ENCODE measurements at regions of chr10 and their contacts with region 1.

Region 1: DNA sequence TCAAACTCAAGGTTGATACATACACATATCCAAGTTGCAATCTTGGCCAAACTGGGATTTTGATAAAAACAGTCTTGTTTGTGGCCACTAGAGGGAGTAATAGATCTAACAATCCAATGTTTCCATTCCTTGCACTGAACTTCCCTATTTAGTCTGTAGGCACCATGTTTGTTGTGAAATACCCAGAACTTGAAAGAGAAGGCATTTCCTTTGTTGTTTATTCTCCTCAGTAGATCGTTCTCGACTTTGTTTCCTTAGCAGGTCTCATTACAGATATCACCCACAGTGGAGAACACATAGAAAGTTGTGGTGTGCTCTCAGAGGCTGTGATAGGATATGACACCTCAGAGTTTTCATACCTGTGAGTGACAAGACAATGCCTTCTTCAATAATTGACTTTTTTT is 70.3 kb upstream of the MXI1 start:
- DNase-seq: no peak
- ATAC-seq: peak; percentile 58 to 79 (median 78)
- H3K4me3 ChIP-seq: peak overlapping the region in 1 of 12 donors; percentile 33
- H3K27ac ChIP-seq: peak overlapping the region in 8 of 12 donors; percentile 10 to 84 (median 42)
- H3K4me1 ChIP-seq: peaks cover 4 to 43% (median 19%) of the 10 kb centered on the region in 12 donors
- H3K27me3 ChIP-seq: no peaks in the 10 kb centered on the region
- CTCF ChIP-seq: peak; percentile 67 to 90 (median 82)
- POLR2A ChIP-seq: no peak

Region 2: GRCh38 chr10:110176141-110177030 is 39.2 kb after region 1 on chr10:
- intact Hi-C with region 1: loop called in 2 of 10 experiments (anchors 1 to 5 kb)
- DNase-seq: peak in 4 of 5 donors; percentile 41 to 66 (median 48)
- ATAC-seq: peak; percentile 62 to 85 (median 72)
- H3K4me3 ChIP-seq: peak overlapping the region in 8 of 12 donors; percentile 6 to 27 (median 16)
- H3K27ac ChIP-seq: peak overlapping the region; percentile 29 to 89 (median 66)
- H3K4me1 ChIP-seq: peaks cover 0 to 23% (median 14%) of the 10 kb centered on the region in 12 donors
- H3K27me3 ChIP-seq: no peaks in the 10 kb centered on the region
- CTCF ChIP-seq: peak in 1 of 12 donors; percentile 7
- POLR2A ChIP-seq: no peak

Region 3: DNA sequence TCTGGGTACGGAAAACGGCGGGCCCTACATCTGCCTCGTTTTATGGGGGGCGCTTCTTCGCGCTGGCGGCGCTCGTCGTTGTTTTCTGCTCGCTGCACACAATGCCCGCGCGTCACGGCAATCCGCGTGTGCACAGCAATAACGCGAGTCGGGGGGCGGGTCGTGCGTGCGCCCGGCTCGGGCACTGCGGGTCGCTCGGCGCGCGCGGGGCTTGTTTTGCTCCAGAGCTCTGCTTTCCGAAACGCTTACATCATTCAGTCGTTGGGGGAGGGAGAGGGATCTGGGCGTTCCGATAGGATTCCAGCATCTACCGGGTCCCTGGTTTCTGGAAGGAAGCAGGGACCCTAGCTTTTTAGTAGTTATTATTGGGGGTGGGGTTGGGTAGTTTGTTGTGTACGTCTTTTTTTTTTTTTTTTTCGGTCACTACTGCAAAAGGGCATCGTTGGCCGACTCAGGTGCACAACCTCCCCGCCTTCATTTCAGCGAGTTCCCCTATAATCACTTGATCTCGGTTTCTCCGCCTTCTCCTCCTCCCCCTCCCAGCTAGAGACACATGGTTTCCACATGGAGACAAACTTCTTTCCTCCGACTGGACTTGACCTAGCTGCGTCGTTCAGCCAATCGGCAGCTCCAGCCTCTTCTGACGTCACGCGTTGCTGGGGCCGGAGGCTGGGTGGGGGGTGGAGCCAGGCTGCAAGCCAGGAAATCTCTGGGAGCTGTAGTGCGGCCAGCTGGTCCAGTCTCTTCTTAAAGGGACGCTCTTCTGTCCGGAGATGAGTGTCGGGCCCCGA is 73.7 kb after region 1 on chr10:
- intact Hi-C with region 1: loop called in 9 of 10 experiments (anchors 2 to 10 kb)
- DNase-seq: peak; percentile 97 to 98 (median 97)
- ATAC-seq: peak; percentile 90 to 92 (median 91)
- H3K4me3 ChIP-seq: peak overlapping the region; percentile 61 to 92 (median 83)
- H3K27ac ChIP-seq: peak overlapping the region; percentile 94 to 99 (median 98)
- H3K4me1 ChIP-seq: peaks cover 11 to 51% (median 34%) of the 10 kb centered on the region in 12 donors
- H3K27me3 ChIP-seq: no peaks in the 10 kb centered on the region
- CTCF ChIP-seq: no peak
- POLR2A ChIP-seq: peak in 1 of 2 donors; percentile 76

Region 4: DNA sequence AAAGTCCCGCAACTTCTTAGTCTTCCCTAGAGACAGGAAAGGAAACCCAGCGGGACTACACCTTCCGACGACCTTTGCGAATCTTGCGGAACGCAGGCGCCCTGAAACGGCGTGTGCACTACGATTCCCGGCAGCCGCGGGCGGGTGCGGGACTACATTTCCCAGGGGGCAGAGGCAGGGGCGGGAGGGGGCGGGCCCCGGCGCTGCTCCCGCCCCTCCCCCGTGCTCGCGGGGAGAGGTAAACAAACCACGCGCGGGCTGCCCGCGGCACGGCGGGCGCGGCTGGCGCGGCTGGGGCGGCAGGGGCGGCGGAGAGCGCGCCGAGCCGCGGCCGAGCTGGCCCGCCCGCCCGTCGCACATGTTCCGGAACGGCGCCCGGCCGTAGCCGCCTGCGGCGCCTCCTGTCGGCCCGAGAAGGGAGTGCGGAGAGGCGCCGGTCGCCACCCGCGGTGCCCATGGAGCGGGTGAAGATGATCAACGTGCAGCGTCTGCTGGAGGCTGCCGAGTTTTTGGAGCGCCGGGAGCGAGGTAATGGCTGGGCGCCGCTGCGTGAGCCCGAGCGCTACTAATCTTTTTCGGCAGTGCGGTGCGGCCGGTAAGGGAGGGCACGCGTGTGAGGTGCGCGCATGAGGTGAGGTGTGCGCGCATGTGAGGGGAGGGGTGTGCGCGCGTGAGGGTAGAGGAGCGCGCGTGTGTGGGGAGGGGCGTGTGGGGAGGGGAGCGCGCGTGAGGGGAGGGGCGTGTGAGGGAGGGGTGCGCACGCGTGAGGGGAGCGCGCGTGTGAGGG is 88.8 kb after region 1 on chr10:
- intact Hi-C with region 1: loop called in 9 of 10 experiments (anchors 1 to 5 kb)
- DNase-seq: peak; percentile 92 to 95 (median 95)
- ATAC-seq: peak; percentile 55 to 78 (median 70)
- H3K4me3 ChIP-seq: peak overlapping the region; percentile 50 to 93 (median 87)
- H3K27ac ChIP-seq: peak overlapping the region; percentile 76 to 96 (median 88)
- H3K4me1 ChIP-seq: peaks cover 12 to 61% (median 39%) of the 10 kb centered on the region in 12 donors
- H3K27me3 ChIP-seq: no peaks in the 10 kb centered on the region
- CTCF ChIP-seq: peak; percentile 55 to 91 (median 72)
- POLR2A ChIP-seq: peak in 1 of 2 donors; percentile 39

Region 5: DNA sequence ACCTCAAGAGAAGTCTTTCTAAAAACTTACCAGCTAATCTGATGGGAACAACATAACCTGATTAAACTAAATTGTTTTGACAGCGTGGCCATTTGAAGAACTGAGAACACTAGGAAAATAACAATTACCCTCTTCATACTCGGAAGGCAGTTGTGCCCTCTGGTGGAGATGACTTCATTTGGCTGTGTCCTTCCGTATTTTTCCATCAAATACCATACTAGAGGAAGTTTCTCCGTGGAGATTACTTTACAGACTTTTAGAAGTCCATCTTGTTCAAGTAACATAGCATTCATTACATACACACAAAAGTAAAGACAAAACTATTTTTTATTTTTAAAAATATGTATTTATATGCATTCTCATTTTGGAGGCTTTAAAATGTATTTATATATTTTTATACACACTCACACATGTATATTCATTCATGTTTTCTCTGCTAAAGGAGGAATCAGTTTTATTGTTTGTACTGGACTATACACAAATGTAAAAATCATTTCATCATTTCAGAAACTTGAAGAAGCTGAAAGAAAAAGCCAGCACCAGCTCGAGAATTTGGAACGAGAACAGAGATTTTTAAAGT is 142.4 kb after region 1 on chr10:
- intact Hi-C with region 1: loop called (anchors 1 to 5 kb)
- DNase-seq: peak in 4 of 5 donors; percentile 34 to 57 (median 50)
- ATAC-seq: peak; percentile 39 to 75 (median 69)
- H3K4me3 ChIP-seq: peak overlapping the region in 1 of 12 donors; percentile 27
- H3K27ac ChIP-seq: peak overlapping the region in 8 of 12 donors; percentile 2 to 46 (median 26)
- H3K4me1 ChIP-seq: peaks cover 0 to 64% (median 35%) of the 10 kb centered on the region in 12 donors
- H3K27me3 ChIP-seq: no peaks in the 10 kb centered on the region
- CTCF ChIP-seq: peak; percentile 62 to 90 (median 81)
- POLR2A ChIP-seq: no peak

Region 6: DNA sequence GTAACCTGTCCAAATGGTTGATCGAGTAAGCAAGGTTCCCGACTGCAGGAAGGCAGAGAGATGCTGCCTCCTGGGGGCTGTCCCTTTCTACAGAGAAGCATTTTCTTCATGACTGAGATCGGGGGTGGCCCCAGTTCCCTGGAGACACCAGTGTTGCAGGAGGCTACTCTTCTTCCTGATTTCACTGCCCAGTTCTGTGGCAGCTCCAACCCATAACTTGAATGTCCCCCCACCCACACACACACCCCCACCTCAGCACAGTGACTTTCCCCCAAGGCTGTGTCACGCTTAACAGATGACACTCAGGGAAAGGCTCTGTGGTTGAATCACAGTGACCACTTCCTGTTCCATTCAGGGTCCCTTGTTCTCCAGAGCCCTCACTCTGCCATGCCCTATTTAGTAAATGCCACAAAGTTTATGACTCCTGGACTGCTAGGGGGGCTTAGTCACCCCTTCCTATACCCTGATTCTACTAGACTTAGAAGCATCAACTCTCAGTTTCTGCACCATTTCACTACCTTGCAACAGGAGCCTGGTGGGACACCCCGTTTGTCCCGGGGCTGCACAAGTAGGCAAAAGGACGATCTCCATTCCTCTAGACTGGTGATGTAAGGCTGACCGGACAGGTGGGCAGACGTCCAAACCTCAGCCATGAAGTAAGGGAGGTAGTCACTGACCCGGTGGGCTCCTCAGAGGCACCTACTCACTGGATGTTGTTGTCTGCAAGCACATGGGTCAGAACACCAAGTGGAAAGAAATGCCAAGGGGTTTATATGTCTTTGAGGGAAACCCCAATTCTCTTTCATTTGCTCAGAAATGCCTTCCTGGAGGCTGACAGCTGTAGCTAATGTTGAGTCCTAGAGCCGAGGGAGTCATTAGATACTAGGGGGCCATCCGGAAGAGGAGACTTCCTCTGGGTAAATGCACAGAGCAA is 399.1 kb after region 1 on chr10:
- intact Hi-C with region 1: loop called in 6 of 10 experiments (anchors 10 kb)
- DNase-seq: peak; percentile 36 to 58 (median 44)
- ATAC-seq: peak in 3 of 4 donors; percentile 68 to 83 (median 83)
- H3K4me3 ChIP-seq: no peak overlapping the region
- H3K27ac ChIP-seq: no peak overlapping the region
- H3K4me1 ChIP-seq: peaks cover 0 to 25% (median 0%) of the 10 kb centered on the region in 12 donors
- H3K27me3 ChIP-seq: no peaks in the 10 kb centered on the region
- CTCF ChIP-seq: peak; percentile 14 to 64 (median 54)
- POLR2A ChIP-seq: no peak

Region 7: GRCh38 chr10:110547139-110547761 is 410.1 kb after region 1 on chr10:
- intact Hi-C with region 1: loop called in 5 of 10 experiments (anchors 10 kb)
- DNase-seq: no peak
- ATAC-seq: peak; percentile 32 to 63 (median 54)
- H3K4me3 ChIP-seq: no peak overlapping the region
- H3K27ac ChIP-seq: peak overlapping the region in 1 of 12 donors; percentile 75
- H3K4me1 ChIP-seq: peaks cover 0 to 12% (median 1%) of the 10 kb centered on the region in 12 donors
- H3K27me3 ChIP-seq: peaks cover 0 to 8% (median 0%) of the 10 kb centered on the region in 9 donors
- CTCF ChIP-seq: peak; percentile 69 to 88 (median 81)
- POLR2A ChIP-seq: no peak